Heart left ventricle (tissue), 16 donors: ENCODE measurements at regions of chr4 and their contacts with region 1.

Region 1: GRCh38 chr4:143335979-143336780 is 496 bp upstream of the GAB1 start:
- DNase-seq: peak; percentile 92 to 94 (median 94)
- ATAC-seq: peak; percentile 86 to 94 (median 91)
- H3K4me3 ChIP-seq: peak overlapping the region; percentile 64 to 99 (median 94)
- H3K27ac ChIP-seq: peak overlapping the region in 11 of 12 donors; percentile 91 to 99 (median 95)
- H3K4me1 ChIP-seq: peaks cover 0 to 42% (median 21%) of the 10 kb centered on the region in 12 donors
- H3K27me3 ChIP-seq: no peaks in the 10 kb centered on the region
- CTCF ChIP-seq: peak in 3 of 12 donors; percentile 16 to 36 (median 28)
- POLR2A ChIP-seq: peak in 1 of 2 donors; percentile 54

Region 2: DNA sequence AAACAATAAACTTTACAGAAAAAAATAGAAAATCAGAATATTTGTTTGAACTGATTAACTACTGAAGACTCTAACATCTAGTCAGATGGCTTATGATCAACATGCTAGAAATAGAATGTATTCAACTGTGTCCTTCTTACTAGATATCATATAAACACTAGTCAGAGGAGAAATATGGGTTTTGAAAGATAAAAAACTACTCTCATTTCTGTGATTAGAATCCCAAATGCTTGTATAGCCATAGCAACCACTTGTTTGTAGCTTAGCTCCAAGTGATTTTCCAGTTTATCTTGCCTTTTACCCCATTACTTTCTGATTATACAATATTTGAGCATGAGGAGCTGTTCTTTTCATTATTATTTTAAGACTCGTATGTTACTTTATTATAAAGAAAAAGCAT is 120.3 kb before region 1 on chr4:
- intact Hi-C with region 1: loop called in 5 of 10 experiments (anchors 2 to 10 kb)
- DNase-seq: no peak
- ATAC-seq: peak in 2 of 4 donors; percentile 29 to 48
- H3K4me3 ChIP-seq: no peak overlapping the region
- H3K27ac ChIP-seq: peak overlapping the region in 6 of 12 donors; percentile 2 to 36 (median 27)
- H3K4me1 ChIP-seq: peaks cover 0 to 26% (median 3%) of the 10 kb centered on the region in 12 donors
- H3K27me3 ChIP-seq: no peaks in the 10 kb centered on the region
- CTCF ChIP-seq: no peak
- POLR2A ChIP-seq: no peak

Region 3: DNA sequence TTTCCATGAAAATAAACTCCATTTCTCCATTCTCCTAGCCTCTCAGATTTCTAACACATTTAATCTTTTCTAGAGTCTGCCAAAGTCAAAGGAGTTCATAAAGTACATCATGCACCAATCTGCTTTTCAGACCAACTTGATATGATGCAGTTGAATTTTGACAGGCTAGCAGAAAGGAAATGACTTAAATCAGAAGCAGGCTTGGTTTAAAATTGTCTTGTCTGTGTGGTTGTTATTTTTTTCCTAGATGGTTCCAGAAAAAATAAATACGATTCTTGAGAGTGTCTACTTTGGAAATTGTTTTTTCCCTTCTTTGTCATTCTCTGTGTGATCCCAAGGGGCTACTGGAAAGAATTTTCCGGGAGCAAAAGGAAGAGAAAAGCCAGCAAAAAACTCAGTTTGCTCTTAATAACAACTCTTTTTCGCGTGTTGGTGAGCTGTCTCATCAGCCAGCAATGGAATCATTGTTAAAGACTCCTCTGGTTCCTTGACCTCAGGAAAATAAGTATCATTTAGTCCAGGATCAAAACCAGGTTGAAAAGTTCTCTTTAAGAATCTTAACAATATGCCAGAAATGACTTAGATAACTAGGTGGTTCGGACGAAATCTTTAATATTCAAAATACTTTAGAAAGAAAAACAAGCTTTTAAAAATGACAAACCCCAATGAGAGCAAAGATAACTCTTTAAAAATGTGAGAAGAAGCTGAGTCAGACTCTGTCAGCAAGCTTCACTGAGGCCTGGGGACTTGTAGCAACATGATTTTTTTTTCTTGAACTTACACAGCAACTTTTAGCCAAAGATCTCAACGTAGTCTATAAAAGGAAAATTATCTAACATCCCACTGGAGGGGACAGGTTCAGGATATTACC is 49.2 kb before region 1 on chr4:
- intact Hi-C with region 1: loop called in 7 of 10 experiments (anchors 5 to 10 kb)
- DNase-seq: no peak
- ATAC-seq: peak; percentile 53 to 65 (median 60)
- H3K4me3 ChIP-seq: peak overlapping the region in 2 of 12 donors; percentile 5 to 24
- H3K27ac ChIP-seq: peak overlapping the region; percentile 11 to 90 (median 63)
- H3K4me1 ChIP-seq: peaks cover 0 to 46% (median 7%) of the 10 kb centered on the region in 12 donors
- H3K27me3 ChIP-seq: no peaks in the 10 kb centered on the region
- CTCF ChIP-seq: no peak
- POLR2A ChIP-seq: no peak

Region 4: DNA sequence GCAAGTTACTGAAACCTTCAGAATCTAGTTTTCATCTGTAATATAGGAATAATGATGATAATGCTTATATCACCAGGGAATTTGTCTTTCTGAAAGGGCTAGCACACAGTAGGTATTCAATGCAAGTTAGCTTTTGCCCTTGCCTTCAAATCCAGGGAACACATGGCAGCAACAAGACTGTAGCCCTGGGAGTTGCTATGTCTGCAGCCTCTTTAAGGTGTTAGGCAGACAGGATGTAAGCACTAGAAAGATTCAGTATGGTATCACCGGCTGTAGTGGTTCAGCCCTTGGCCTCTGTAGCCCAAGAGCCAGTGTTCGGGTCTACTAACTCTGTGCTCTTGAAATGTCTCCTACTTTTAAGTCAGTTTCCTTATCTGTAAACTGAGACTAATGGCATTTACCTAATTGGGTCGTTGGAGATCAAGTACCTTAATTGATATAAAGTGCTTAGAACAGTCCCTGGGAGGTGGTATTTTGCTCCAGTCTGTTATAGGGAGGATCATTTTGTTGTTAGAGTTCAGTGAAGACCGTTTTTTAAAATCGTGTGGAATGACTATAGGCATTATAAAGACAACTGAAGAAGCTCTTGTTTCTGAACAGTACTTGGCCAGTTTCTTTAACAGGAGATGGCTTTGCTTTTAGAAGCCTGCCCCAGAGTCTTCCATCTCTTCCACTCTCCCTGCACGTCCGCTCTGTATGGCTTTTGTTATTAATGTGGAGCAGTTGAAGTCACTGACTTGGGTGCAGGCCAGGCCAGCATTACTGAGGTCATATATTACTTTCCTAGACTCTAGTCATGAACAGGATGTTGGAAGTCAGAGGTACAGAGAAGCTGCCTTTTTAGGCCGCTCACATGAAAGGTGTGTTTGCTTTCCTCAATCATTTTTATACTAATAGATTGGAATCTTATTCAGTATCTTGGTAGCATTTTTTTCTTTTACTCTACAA is 45.3 kb after region 1 on chr4:
- intact Hi-C with region 1: loop called in 5 of 10 experiments (anchors 2 to 5 kb)
- DNase-seq: peak; percentile 85 to 92 (median 89)
- ATAC-seq: peak; percentile 77 to 93 (median 88)
- H3K4me3 ChIP-seq: peak overlapping the region in 8 of 12 donors; percentile 2 to 31 (median 14)
- H3K27ac ChIP-seq: peak overlapping the region; percentile 59 to 87 (median 78)
- H3K4me1 ChIP-seq: peaks cover 7 to 97% (median 81%) of the 10 kb centered on the region in 12 donors
- H3K27me3 ChIP-seq: no peaks in the 10 kb centered on the region
- CTCF ChIP-seq: no peak
- POLR2A ChIP-seq: no peak

Region 5: DNA sequence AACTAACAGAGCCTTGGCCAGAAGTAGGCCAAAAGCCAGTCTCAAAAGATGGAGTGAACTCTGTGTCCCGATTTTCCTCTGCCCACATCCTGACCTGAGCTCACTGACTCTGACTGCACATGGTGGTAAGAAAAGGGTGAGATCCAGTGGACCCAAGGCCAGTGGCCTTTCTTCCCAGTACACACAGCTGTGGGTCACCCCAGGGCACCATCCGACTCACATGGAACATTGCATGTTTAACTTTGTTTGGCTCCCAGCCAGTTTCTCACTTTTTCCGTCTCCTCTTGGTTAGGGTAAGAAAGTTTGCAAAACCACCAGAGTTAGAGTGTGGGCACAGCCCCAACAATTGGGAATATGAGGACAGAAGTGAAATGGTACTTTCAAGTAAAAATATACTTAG is 70.3 kb after region 1 on chr4:
- intact Hi-C with region 1: loop called in 2 of 10 experiments (anchors 5 kb)
- DNase-seq: peak in 4 of 5 donors; percentile 50 to 69 (median 58)
- ATAC-seq: peak; percentile 49 to 85 (median 68)
- H3K4me3 ChIP-seq: no peak overlapping the region
- H3K27ac ChIP-seq: peak overlapping the region; percentile 1 to 70 (median 53)
- H3K4me1 ChIP-seq: peaks cover 10 to 100% (median 87%) of the 10 kb centered on the region in 12 donors
- H3K27me3 ChIP-seq: no peaks in the 10 kb centered on the region
- CTCF ChIP-seq: no peak
- POLR2A ChIP-seq: no peak

Region 6: GRCh38 chr4:143513306-143514168 is 177.4 kb after region 1 on chr4 and contains the start of gene SMARCA5:
- intact Hi-C with region 1: loop called in 2 of 10 experiments (anchors 2 to 10 kb)
- DNase-seq: peak; percentile 96 to 98 (median 98)
- ATAC-seq: peak; percentile 94 to 97 (median 96)
- H3K4me3 ChIP-seq: peak within 1 kb of the TSS; percentile 69 to 99 (median 89)
- H3K27ac ChIP-seq: peak within 1 kb of the TSS; percentile 88 to 100 (median 98)
- H3K4me1 ChIP-seq: peaks cover 8 to 42% (median 35%) of the 10 kb centered on the region in 12 donors
- H3K27me3 ChIP-seq: no peaks in the 10 kb centered on the region
- CTCF ChIP-seq: no peak
- POLR2A ChIP-seq: peak; percentile 67 to 88
- total RNA-seq, gene SMARCA5: 21.2 to 36.3 (median 30.3) TPM